GM23248 (cell line): ENCODE measurements at regions of chr10 and their contacts with region 1.

Region 1: DNA sequence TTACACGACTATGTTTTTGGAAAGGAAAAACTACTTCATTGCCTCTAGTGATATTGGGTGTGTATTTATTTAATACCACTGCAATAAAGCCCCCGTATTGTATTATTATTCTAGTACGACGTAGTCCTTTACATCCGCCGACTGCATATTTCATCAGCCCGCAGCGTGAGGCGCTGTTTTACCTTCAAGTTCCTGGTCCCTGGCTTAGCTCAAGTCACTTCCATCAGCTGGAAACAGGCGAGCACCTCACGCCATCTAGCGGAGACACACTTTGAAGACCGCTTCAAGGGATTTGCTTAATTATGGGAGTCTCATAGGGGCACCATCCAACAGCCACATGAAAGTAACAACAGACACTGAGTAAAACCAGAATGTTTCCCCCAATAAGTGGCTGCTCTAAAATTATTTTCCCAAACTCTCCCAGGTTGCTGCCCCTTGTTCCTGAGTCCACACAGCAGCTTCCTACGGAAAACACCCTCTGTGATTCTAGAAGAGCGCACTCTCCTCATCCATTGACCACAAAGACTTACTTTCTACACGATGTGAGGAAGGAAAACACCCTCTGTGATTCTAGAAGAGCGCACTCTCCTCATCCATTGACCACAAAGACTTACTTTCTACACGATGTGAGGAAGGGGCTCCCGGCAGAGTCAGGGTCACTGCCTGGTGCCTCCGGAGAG is 15.7 kb upstream of the ITIH2 start:
- DNase-seq: peak; percentile 91
- H3K4me3 ChIP-seq: no peak overlapping the region
- H3K27ac ChIP-seq: no peak overlapping the region
- H3K4me1 ChIP-seq: no peaks in the 10 kb centered on the region
- H3K27me3 ChIP-seq: no peaks in the 10 kb centered on the region

Region 2: GRCh38 chr10:7520507-7521485 is 166.6 kb before region 1 on chr10:
- in situ Hi-C with region 1: loop called (anchors 5 kb)
- DNase-seq: no peak
- H3K4me3 ChIP-seq: no peak overlapping the region
- H3K27ac ChIP-seq: no peak overlapping the region
- H3K4me1 ChIP-seq: no peaks in the 10 kb centered on the region
- H3K27me3 ChIP-seq: no peaks in the 10 kb centered on the region; the same call in 1 of the 2 replicates